ENCODE measurements at regions of chr14 and their contacts with region 1.

Region 1: GRCh38 chr14:83071888-83072501 is 1538.3 kb upstream of the SEL1L start:
- DNase-seq: no peak
- ATAC-seq: no peak
- H3K4me3 Mint-ChIP-seq: no peak overlapping the region
- H3K27ac Mint-ChIP-seq: no peak overlapping the region
- H3K4me1 Mint-ChIP-seq: no peaks in the 10 kb centered on the region
- H3K27me3 Mint-ChIP-seq: no peaks in the 10 kb centered on the region

Region 2: GRCh38 chr14:83085136-83085535 is 13.1 kb after region 1 on chr14:
- CTCF ChIA-PET with region 1: no interaction called
- POLR2A ChIA-PET with region 1: no interaction called
- intact Hi-C with region 1: loop called in 1 of 2 experiments (anchors 1 kb)
- DNase-seq: no peak
- ATAC-seq: no peak
- H3K4me3 Mint-ChIP-seq: no peak overlapping the region
- H3K27ac Mint-ChIP-seq: no peak overlapping the region
- H3K4me1 Mint-ChIP-seq: no peaks in the 10 kb centered on the region
- H3K27me3 Mint-ChIP-seq: no peaks in the 10 kb centered on the region